Ovary (tissue), 10 donors: ENCODE measurements at regions of chr10 and their contacts with region 1.

Region 1: DNA sequence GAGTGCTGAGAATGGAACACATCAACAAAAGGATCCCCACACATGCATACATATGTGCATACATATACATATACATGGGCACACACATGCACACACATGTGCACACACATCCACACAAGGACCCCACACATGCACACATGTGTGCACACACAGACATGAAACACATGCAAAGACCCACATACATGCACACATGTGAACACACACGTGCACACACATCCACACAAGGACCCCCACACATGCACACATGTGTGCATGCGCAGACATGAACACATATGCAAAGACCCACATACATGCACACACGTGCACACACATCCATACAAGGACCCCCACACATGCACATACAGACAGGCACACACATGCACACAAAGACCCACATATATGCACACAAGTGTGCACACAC is 104.4 kb upstream of the ADARB2 start:
- DNase-seq: no peak
- H3K4me3 ChIP-seq: no peak overlapping the region
- H3K27ac ChIP-seq: no peak overlapping the region
- H3K4me1 ChIP-seq: no peaks in the 10 kb centered on the region
- H3K27me3 ChIP-seq: no peaks in the 10 kb centered on the region
- CTCF ChIP-seq: no peak
- EP300 ChIP-seq: no peak
- POLR2A ChIP-seq: no peak

Region 2: DNA sequence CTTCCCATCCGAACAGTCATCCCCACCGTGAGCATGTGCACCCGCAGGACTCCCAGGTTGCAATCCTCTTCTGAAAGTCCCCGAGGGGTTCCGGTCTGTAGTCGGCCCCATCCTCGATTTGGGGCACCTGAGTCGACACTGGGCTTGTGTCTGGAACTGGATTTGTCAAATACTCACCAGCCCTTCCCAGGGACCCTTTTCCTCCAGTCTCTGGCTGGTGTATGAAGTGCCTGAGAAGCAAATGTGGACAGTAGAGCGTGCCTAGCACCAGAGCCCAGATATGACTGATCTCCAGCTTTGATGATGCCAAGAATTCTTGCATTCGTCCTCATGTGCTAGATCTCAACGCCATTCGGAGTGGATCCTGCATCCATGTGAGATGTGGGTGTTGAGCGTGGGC is 28.1 kb after region 1 on chr10:
- intact Hi-C with region 1: loop called in 1 of 4 experiments (anchors 2 kb)
- DNase-seq: no peak
- H3K4me3 ChIP-seq: no peak overlapping the region
- H3K27ac ChIP-seq: no peak overlapping the region
- H3K4me1 ChIP-seq: no peaks in the 10 kb centered on the region
- H3K27me3 ChIP-seq: no peaks in the 10 kb centered on the region
- CTCF ChIP-seq: no peak
- EP300 ChIP-seq: no peak
- POLR2A ChIP-seq: no peak